CD4-positive, alpha-beta T cell (primary cell): ENCODE measurements at regions of chr17 and their contacts with region 1.

Region 1: GRCh38 chr17:1467898-1468492 is 12.0 kb upstream of the CRK start:
- DNase-seq: peak in 2 of 14 experiments; percentile 49 to 54
- ATAC-seq: no peak
- H3K4me3 ChIP-seq: no peak overlapping the region
- H3K4me3 Mint-ChIP-seq: no peak overlapping the region
- H3K27ac ChIP-seq: no peak overlapping the region
- H3K27ac Mint-ChIP-seq: no peak overlapping the region
- H3K4me1 ChIP-seq: peaks cover 10% of the 10 kb centered on the region
- H3K4me1 Mint-ChIP-seq: peaks cover 13% of the 10 kb centered on the region
- H3K27me3 ChIP-seq: no peaks in the 10 kb centered on the region
- H3K27me3 Mint-ChIP-seq: no peaks in the 10 kb centered on the region
- CTCF ChIP-seq: no peak

Region 2: DNA sequence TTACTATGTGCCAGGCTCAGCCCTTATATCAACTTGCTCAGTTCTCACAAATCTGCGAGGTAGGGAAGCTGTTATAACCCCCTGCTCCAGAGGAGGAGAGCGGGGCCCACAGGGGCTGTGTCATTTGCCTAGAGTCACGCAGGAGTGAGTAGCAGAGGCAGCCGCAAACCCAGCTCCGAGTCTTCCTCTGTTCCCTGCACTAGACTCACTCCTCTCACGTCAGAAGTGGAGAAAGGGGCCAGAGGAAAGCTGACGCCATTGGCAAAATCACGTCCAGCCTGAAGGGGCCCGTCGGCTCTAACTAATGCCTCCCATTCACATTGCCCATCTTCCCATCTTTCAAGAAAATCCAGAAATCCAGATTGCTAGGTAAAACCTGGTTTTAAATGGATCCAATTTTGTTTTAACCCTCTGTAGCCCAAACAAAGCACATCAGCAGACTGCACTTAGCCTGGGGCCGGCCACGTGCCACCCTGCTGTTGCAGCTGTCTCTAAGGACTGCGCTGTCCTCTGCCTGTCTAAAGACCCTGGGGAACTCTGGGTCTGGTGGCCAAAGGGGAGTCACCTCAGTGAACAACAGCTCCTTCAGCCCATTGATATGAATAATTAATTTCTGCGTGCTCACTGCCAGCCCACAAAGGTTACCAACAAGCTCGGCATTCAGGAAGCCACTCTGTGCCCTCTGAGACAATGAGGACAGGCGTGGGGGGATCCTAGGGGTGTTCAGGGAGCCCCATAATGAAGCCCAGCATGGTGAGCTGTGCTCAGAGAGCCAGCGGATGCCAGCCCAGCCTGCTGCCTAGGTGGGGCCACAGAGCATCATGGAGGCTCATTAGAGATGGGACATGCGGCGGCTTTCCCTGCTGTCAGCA is 251.5 kb before region 1 on chr17:
- CTCF ChIA-PET with region 1: no interaction called
- POLR2A ChIA-PET with region 1: no interaction called
- intact Hi-C with region 1: no loop called
- DNase-seq: no peak
- ATAC-seq: no peak
- H3K4me3 ChIP-seq: no peak overlapping the region
- H3K4me3 Mint-ChIP-seq: no peak overlapping the region
- H3K27ac ChIP-seq: no peak overlapping the region
- H3K27ac Mint-ChIP-seq: no peak overlapping the region
- H3K4me1 ChIP-seq: no peaks in the 10 kb centered on the region
- H3K4me1 Mint-ChIP-seq: no peaks in the 10 kb centered on the region
- H3K27me3 ChIP-seq: peaks cover 0 to 7% of the 10 kb centered on the region in 2 experiments
- H3K27me3 Mint-ChIP-seq: peaks cover 22% of the 10 kb centered on the region
- CTCF ChIP-seq: no peak

Region 3: DNA sequence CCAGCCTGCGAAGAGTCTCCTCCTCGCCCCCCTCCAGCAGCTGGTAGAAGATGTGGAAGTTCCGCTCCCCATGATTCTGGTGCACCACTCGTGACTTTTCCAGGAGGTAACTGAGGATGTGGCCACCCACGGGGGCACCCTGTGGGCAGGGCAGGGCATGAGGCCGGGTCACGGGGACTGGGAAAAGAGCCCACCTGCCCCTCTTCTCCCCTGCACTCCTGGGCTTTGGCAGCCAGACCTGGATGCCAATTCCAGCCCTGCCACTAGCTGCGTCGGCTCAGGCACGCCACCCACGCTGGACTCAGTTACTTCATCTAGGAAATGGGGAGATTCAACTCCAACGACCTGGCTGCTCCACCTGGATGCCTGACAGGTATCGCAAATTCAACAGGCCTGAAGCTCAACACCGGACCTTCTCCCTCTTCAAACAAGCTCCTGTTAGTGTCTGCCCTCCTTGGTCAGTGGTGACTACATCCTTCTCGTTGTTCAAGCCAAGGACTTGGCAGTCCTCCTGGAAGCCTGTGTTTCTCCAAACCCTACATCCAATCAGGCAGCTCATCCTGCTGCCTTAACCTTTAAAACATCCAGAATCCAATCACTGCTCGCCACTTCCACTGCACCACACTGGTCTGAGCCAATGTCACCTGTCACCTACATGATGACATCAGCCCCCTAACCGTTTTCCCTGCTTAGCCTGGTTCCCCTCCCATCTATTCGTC is 12.9 kb after region 1 on chr17:
- CTCF ChIA-PET with region 1: no interaction called
- POLR2A ChIA-PET with region 1: interaction called, 5 read pairs
- intact Hi-C with region 1: loop called in 1 of 2 experiments (anchors 2 kb)
- DNase-seq: no peak
- ATAC-seq: no peak
- H3K4me3 ChIP-seq: no peak overlapping the region
- H3K4me3 Mint-ChIP-seq: no peak overlapping the region
- H3K27ac ChIP-seq: no peak overlapping the region
- H3K27ac Mint-ChIP-seq: no peak overlapping the region
- H3K4me1 ChIP-seq: peaks cover 14% of the 10 kb centered on the region
- H3K4me1 Mint-ChIP-seq: peaks cover 10% of the 10 kb centered on the region
- H3K27me3 ChIP-seq: no peaks in the 10 kb centered on the region
- H3K27me3 Mint-ChIP-seq: no peaks in the 10 kb centered on the region
- CTCF ChIP-seq: no peak